ENCODE measurements at regions of chr4 and their contacts with region 1.

Region 1: DNA sequence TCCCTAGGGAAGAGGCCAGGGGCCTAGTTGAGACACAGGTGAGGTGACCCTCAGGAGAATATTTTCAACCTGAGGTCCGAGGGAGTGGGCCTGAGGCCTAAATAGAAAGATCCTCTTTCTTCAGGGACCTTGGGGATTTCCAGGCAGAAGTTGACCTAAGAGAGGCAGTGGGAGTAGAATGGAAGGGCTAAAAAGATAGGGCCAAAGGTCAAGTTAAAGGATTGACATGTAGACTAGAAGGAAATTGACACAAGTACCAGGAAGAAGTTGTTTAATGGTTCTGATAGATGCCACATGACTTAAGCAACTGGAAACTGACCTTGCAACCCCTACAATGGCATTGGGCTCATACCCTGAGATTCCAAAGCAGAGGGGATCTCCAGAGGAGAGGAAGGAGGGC is 76.9 kb downstream of the SHROOM3 start:
- H3K4me3 Mint-ChIP-seq: no peak overlapping the region
- H3K27ac Mint-ChIP-seq: peak overlapping the region; percentile 20
- H3K4me1 Mint-ChIP-seq: peaks cover 26% of the 10 kb centered on the region
- H3K27me3 Mint-ChIP-seq: no peaks in the 10 kb centered on the region

Region 2: GRCh38 chr4:76562161-76562560 is 50.2 kb after region 1 on chr4:
- intact Hi-C with region 1: no loop called
- H3K4me3 Mint-ChIP-seq: no peak overlapping the region
- H3K27ac Mint-ChIP-seq: no peak overlapping the region
- H3K4me1 Mint-ChIP-seq: no peaks in the 10 kb centered on the region
- H3K27me3 Mint-ChIP-seq: no peaks in the 10 kb centered on the region

Region 3: DNA sequence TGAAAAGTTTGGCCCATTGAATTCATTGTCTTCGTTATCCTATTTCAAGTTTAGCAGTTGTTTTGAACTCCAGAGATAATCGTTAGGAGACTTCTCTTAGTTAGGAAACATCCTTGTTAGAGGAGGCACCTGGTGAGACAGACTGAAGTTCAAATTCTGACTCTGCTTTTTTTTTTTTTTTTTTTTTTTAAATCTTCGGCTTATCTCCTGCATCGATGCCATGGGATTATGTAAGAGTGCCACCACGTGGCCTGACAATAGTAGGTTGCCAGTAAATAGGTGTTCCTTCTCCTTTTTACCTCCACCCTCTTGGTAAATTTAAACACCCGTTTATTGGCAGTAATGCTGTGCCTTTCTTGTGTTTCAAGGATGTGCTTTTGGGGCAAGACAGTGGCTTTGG is 236.7 kb after region 1 on chr4:
- intact Hi-C with region 1: loop called (anchors 1 kb)
- H3K4me3 Mint-ChIP-seq: no peak overlapping the region
- H3K27ac Mint-ChIP-seq: no peak overlapping the region
- H3K4me1 Mint-ChIP-seq: no peaks in the 10 kb centered on the region
- H3K27me3 Mint-ChIP-seq: peaks cover 24% of the 10 kb centered on the region

Region 4: GRCh38 chr4:76758290-76758882 is 246.4 kb after region 1 on chr4:
- intact Hi-C with region 1: loop called (anchors 1 kb)
- H3K4me3 Mint-ChIP-seq: no peak overlapping the region
- H3K27ac Mint-ChIP-seq: no peak overlapping the region
- H3K4me1 Mint-ChIP-seq: no peaks in the 10 kb centered on the region
- H3K27me3 Mint-ChIP-seq: peaks cover 13% of the 10 kb centered on the region

Region 5: DNA sequence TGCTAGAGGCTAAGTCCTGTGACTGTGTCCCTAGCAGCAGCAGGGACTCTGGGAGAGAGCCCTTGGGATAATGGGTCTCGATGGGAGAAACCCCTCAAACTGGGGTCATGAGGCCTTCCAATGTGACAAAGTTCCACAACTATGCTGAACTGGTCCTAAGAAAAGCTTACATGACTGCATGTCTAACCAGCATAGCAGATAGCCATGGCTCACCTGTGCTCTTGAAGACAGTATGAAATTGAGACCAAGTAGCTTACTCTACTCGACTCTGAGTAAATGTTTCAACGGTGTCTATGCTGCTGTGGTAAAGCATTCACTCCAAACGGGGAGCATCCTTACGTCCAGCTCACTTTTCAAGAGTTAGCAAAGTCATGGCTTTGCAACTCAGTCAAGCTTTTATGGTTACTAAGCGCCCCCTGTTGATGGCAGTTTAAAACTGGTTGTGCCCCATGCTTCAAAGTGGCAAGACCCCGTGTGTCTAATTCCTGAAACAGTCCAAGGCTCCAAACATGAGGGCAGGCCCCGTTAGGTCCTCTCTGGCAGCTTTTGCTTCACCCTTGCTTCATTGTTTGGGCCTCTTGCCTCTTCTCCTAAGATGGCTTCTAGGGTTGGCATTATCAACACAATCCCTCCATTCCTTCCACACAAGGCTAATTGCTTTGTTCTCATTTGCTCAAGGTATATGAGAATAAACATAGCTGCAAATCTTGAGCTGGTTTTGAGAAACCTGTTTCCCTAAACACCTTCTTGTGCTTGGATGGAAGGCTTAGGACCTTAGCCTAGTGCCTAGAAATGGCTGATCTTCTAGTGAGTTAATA is 691.6 kb after region 1 on chr4:
- intact Hi-C with region 1: loop called (anchors 5 kb)
- H3K4me3 Mint-ChIP-seq: no peak overlapping the region
- H3K27ac Mint-ChIP-seq: peak overlapping the region; percentile 32
- H3K4me1 Mint-ChIP-seq: peaks cover 15% of the 10 kb centered on the region
- H3K27me3 Mint-ChIP-seq: no peaks in the 10 kb centered on the region